ENCODE measurements at regions of chr12 and their contacts with region 1.

Region 1: GRCh38 chr12:54201001-54201794 is 12.4 kb upstream of the SMUG1 start:
- H3K4me3 ChIP-seq: no peak overlapping the region
- H3K27ac ChIP-seq: no peak overlapping the region
- H3K4me1 ChIP-seq: peaks cover 10% of the 10 kb centered on the region
- CTCF ChIP-seq: peak; percentile 94

Region 2: DNA sequence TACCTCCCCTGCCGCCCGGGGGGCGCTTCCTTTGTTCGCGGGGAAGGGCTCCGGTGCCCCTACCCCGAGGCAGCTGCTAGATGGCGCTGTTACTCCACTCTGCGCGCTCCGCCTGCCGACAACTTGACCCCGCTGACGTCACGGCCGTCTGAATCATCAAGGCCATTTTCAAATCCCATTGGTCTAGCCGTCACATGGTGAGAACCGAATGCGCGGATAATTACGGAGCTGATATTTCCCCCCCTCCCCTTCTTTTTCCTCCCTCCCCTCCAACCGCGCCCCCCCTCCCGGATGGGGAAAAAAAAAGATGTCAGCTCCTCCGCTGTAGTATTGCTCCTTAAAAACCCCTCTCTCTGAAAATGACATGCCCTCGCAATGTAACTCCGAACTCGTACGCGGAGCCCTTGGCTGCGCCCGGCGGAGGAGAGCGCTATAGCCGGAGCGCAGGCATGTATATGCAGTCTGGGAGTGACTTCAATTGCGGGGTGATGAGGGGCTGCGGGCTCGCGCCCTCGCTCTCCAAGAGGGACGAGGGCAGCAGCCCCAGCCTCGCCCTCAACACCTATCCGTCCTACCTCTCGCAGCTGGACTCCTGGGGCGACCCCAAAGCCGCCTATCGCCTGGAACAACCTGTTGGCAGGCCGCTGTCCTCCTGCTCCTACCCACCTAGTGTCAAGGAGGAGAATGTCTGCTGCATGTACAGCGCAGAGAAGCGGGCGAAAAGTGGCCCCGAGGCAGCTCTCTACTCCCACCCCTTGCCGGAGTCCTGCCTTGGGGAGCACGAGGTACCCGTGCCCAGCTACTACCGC is 216.1 kb before region 1 on chr12 and contains the start of gene HOXC10:
- CTCF ChIA-PET with region 1: interaction called, 88 read pairs
- POLR2A ChIA-PET with region 1: no interaction called
- H3K4me3 ChIP-seq: peak within 1 kb of the TSS; percentile 32
- H3K27ac ChIP-seq: peak within 1 kb of the TSS; percentile 90
- H3K4me1 ChIP-seq: peaks cover 25% of the 10 kb centered on the region
- CTCF ChIP-seq: peak; percentile 81

Region 3: GRCh38 chr12:54017878-54018467 is 183.2 kb before region 1 on chr12:
- CTCF ChIA-PET with region 1: interaction called, 11 read pairs
- POLR2A ChIA-PET with region 1: interaction called, 6 read pairs
- H3K4me3 ChIP-seq: peak overlapping the region; percentile 81
- H3K27ac ChIP-seq: peak overlapping the region; percentile 100
- H3K4me1 ChIP-seq: peaks cover 49% of the 10 kb centered on the region
- CTCF ChIP-seq: no peak

Region 4: DNA sequence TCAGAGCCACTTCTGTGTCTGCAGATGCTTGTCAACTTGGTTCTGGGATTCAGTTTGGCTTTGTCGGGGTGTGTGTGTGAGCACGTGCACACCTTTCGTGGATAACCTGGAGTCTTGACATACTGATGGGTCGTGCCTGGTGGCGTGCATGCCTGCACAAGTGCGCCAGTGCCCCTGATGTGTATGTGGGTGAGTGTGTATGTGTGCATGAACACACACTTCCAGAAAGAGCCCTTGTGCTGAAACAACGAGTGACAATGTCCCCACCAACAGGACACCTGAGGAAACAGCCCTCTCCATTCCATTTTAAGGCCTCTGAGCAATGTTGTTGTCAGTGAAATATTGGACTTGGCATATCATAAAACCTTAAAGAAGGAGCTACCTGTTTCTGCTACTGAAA is 66.3 kb before region 1 on chr12:
- CTCF ChIA-PET with region 1: interaction called, 26 read pairs
- POLR2A ChIA-PET with region 1: interaction called, 6 read pairs
- H3K4me3 ChIP-seq: no peak overlapping the region
- H3K27ac ChIP-seq: peak overlapping the region; percentile 17; the same call in 1 of the 2 replicates
- H3K4me1 ChIP-seq: peaks cover 12% of the 10 kb centered on the region
- CTCF ChIP-seq: peak; percentile 70

Region 5: DNA sequence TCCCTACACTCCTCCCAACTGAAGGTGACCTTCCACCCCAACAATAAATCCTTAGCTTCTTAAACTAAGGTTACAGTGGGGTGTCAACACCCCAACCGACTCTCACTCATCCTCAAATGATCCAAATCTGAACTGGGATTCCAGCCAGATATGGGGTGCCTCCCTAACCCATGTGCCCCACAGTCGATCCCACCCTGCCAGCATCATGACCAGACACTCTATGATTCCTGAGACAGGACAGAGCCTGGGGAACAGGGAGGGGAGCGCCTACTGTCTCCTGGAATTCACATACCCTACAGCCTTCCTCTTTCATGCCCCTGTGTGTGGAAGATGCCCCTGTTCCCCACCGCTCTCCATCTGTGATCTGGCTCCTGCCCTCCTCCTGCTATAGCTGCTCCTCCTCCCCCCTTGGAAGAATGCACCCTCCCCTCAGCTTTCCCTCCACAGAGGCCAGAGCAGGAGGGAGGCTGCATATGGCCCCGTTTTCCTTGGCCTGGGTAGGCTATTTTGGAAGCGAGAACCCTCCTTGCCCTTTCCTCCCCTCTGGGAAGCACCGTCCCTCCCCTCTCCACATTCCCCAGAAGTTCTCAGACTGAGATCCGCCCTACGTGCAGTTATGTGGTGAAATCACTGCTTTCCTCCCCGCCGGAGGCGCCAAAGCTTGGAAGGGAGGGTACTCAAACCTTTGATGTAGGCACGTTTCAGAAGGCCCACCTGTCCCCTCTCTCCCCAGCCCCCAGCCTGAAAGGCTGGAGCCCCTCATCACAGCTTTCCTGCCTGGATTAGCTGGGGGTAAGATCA is 60.4 kb before region 1 on chr12:
- CTCF ChIA-PET with region 1: interaction called, 26 read pairs
- POLR2A ChIA-PET with region 1: no interaction called
- H3K4me3 ChIP-seq: no peak overlapping the region
- H3K27ac ChIP-seq: no peak overlapping the region
- H3K4me1 ChIP-seq: peaks cover 2% of the 10 kb centered on the region
- CTCF ChIP-seq: no peak

Measured in HEK293 (cell line).